ENCODE measurements at regions of chr14 and their contacts with region 1.

Region 1: GRCh38 chr14:64478634-64479250 is 13.4 kb downstream of the AKAP5 start:
- DNase-seq: peak; percentile 46
- H3K4me3 ChIP-seq: no peak overlapping the region
- H3K27ac ChIP-seq: no peak overlapping the region
- H3K4me1 ChIP-seq: no peaks in the 10 kb centered on the region
- CTCF ChIP-seq: peak; percentile 89

Region 2: GRCh38 chr14:64345513-64345912 is 133.2 kb before region 1 on chr14:
- CTCF ChIA-PET with region 1: interaction called, 3 read pairs
- POLR2A ChIA-PET with region 1: interaction called, 4 read pairs
- intact Hi-C with region 1: loop called (anchors 2 kb)
- DNase-seq: no peak
- H3K4me3 ChIP-seq: no peak overlapping the region
- H3K27ac ChIP-seq: no peak overlapping the region
- H3K4me1 ChIP-seq: peaks cover 5% of the 10 kb centered on the region
- CTCF ChIP-seq: no peak

Region 3: DNA sequence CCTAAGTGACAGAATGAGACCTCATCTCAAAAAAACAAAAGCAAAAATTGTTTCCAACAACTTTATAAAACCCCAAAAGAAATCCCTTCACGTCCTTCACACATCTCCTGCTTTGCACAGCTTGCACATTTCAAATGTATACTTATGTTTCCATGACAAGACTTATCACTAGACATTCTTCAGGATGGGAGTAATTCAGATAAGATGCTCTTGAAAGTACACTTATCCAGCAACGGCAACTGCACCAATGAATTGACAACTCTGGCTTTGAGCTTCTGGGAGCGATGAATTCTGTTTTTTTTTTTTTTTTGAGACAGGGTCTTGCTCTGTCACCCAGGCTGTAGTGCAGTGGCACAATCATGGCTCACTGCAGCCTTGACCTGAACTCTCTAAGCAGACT is 44.2 kb before region 1 on chr14:
- CTCF ChIA-PET with region 1: interaction called, 3 read pairs
- POLR2A ChIA-PET with region 1: interaction called, 3 read pairs
- intact Hi-C with region 1: loop called (anchors 5 kb)
- DNase-seq: no peak
- H3K4me3 ChIP-seq: no peak overlapping the region
- H3K27ac ChIP-seq: no peak overlapping the region
- H3K4me1 ChIP-seq: no peaks in the 10 kb centered on the region
- CTCF ChIP-seq: no peak

Region 4: GRCh38 chr14:64654246-64654900 is 175.6 kb after region 1 on chr14:
- CTCF ChIA-PET with region 1: no interaction called
- POLR2A ChIA-PET with region 1: no interaction called
- intact Hi-C with region 1: no loop called
- DNase-seq: no peak
- H3K4me3 ChIP-seq: no peak overlapping the region
- H3K27ac ChIP-seq: no peak overlapping the region
- H3K4me1 ChIP-seq: no peaks in the 10 kb centered on the region
- CTCF ChIP-seq: no peak